ENCODE measurements at regions of chr2 and their contacts with region 1.

Region 1: DNA sequence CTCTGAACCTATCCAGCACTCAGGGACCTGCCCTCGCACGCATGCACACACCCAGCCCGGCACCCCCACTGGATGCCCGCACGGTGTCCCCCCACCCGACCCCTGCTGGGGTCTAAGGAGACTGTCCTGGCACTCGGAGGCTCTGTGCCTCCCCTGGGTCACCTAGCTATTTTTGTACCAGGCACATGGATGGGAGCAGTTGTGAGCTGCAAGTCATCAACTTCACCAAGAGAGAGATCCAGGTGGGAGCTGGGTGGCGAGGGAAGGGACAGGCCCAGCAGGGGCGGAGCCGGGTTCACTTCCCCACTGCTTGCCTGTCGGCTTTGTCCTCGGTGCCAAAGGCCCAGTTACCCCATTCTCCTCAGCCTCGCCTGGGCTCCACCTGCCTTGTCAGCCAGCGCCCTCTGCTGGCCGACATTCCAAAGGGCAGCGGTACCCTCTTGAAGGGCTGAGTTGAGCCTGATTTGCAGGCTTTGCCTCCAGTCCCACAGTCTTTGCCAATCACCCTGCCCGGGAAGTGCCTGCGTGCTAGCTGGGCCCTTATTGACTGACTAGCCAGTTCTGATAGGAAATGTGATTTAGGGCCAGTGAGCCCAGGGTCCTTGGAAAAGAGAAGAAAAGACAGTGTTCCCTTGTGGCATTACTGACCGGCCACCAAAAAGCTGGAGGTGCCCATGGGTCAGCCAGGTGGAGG is 5.8 kb downstream of the NT5DC4 start:
- DNase-seq: peak; percentile 92
- ATAC-seq: peak; percentile 96
- H3K4me3 Mint-ChIP-seq: no peak overlapping the region
- H3K27ac Mint-ChIP-seq: no peak overlapping the region
- H3K4me1 Mint-ChIP-seq: peaks cover 3% of the 10 kb centered on the region
- H3K27me3 Mint-ChIP-seq: no peaks in the 10 kb centered on the region
- CTCF ChIP-seq: peak; percentile 97

Region 2: GRCh38 chr2:112626604-112627059 is 100.0 kb before region 1 on chr2:
- CTCF ChIA-PET with region 1: interaction called, 291 read pairs
- POLR2A ChIA-PET with region 1: interaction called, 5 read pairs
- intact Hi-C with region 1: loop called (anchors 1 kb)
- DNase-seq: peak; percentile 74
- ATAC-seq: peak; percentile 43
- H3K4me3 Mint-ChIP-seq: no peak overlapping the region
- H3K27ac Mint-ChIP-seq: no peak overlapping the region
- H3K4me1 Mint-ChIP-seq: peaks cover 56% of the 10 kb centered on the region
- H3K27me3 Mint-ChIP-seq: peaks cover 13% of the 10 kb centered on the region
- CTCF ChIP-seq: peak; percentile 92

Region 3: GRCh38 chr2:112658820-112659667 is 67.6 kb before region 1 on chr2:
- CTCF ChIA-PET with region 1: interaction called, 10 read pairs
- POLR2A ChIA-PET with region 1: no interaction called
- intact Hi-C with region 1: no loop called
- DNase-seq: no peak
- ATAC-seq: no peak
- H3K4me3 Mint-ChIP-seq: no peak overlapping the region
- H3K27ac Mint-ChIP-seq: peak overlapping the region; percentile 64
- H3K4me1 Mint-ChIP-seq: peaks cover 52% of the 10 kb centered on the region
- H3K27me3 Mint-ChIP-seq: no peaks in the 10 kb centered on the region
- CTCF ChIP-seq: no peak

Region 4: GRCh38 chr2:112692496-112692911 is 34.1 kb before region 1 on chr2:
- CTCF ChIA-PET with region 1: interaction called, 37 read pairs
- POLR2A ChIA-PET with region 1: interaction called, 4 read pairs
- intact Hi-C with region 1: no loop called
- DNase-seq: peak; percentile 83
- ATAC-seq: peak; percentile 91
- H3K4me3 Mint-ChIP-seq: no peak overlapping the region
- H3K27ac Mint-ChIP-seq: peak overlapping the region; percentile 59
- H3K4me1 Mint-ChIP-seq: peaks cover 29% of the 10 kb centered on the region
- H3K27me3 Mint-ChIP-seq: no peaks in the 10 kb centered on the region
- CTCF ChIP-seq: no peak

Region 5: GRCh38 chr2:112706170-112706664 is 20.4 kb before region 1 on chr2:
- CTCF ChIA-PET with region 1: interaction called, 35 read pairs
- POLR2A ChIA-PET with region 1: interaction called, 6 read pairs
- intact Hi-C with region 1: no loop called
- DNase-seq: peak; percentile 89
- ATAC-seq: peak; percentile 96
- H3K4me3 Mint-ChIP-seq: no peak overlapping the region
- H3K27ac Mint-ChIP-seq: no peak overlapping the region
- H3K4me1 Mint-ChIP-seq: peaks cover 28% of the 10 kb centered on the region
- H3K27me3 Mint-ChIP-seq: peaks cover 20% of the 10 kb centered on the region
- CTCF ChIP-seq: no peak

Region 6: GRCh38 chr2:112749755-112750559 is 23.3 kb after region 1 on chr2:
- CTCF ChIA-PET with region 1: interaction called, 55 read pairs
- POLR2A ChIA-PET with region 1: interaction called, 3 read pairs
- intact Hi-C with region 1: no loop called
- DNase-seq: peak; percentile 83
- ATAC-seq: peak; percentile 89
- H3K4me3 Mint-ChIP-seq: no peak overlapping the region
- H3K27ac Mint-ChIP-seq: peak overlapping the region; percentile 1
- H3K4me1 Mint-ChIP-seq: peaks cover 14% of the 10 kb centered on the region
- H3K27me3 Mint-ChIP-seq: no peaks in the 10 kb centered on the region
- CTCF ChIP-seq: peak; percentile 97

Region 7: GRCh38 chr2:112821142-112821541 is 94.5 kb after region 1 on chr2:
- CTCF ChIA-PET with region 1: no interaction called
- POLR2A ChIA-PET with region 1: no interaction called
- intact Hi-C with region 1: no loop called
- DNase-seq: peak; percentile 86
- ATAC-seq: peak; percentile 95
- H3K4me3 Mint-ChIP-seq: no peak overlapping the region
- H3K27ac Mint-ChIP-seq: no peak overlapping the region
- H3K4me1 Mint-ChIP-seq: peaks cover 23% of the 10 kb centered on the region
- H3K27me3 Mint-ChIP-seq: peaks cover 5% of the 10 kb centered on the region
- CTCF ChIP-seq: no peak

Region 8: DNA sequence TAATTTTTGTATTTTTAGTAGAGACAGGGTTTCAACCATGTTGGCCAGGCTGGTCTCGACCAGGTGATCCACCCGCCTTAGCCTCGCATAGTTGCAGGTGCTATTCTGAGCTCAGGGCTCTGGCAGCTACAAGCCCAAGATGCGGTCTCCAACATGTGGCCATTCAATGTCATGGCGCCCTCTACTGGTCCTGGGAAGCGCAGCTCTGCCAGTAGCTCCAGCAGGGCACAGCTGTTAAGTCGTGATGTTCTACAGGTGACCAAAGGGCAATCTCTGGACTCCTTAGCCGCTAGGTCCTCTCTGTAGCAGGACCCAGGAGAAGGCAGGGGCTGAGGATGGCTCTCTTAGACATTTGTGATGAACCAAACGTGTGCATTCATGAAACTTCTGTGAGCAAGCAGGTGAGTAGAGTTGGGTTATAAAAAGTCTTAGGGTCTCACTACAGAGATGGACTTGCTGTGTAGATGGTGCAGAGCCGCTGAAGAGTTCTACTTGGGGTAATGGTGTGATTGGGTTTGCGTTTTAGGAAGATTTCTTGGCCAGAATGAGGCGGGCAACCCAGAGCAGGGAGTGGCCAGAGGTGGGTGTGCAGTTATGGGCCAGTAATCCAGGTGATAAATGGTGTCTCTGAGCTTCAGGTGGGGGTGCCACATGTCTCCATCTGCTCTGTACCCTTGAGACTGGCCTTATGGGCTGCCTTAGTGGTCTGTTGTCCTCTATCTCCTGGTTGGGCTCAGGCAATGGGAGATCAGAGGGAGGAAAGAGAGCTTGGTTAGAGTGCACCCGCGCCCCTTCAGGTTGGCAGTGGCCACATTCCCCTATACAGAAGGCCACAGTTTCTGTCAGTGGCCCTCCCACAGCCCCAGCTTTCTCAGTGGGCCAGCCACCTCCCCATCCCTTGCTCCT is 215.4 kb after region 1 on chr2:
- CTCF ChIA-PET with region 1: interaction called, 20 read pairs
- POLR2A ChIA-PET with region 1: no interaction called
- intact Hi-C with region 1: no loop called
- DNase-seq: peak; percentile 88
- ATAC-seq: peak; percentile 99
- H3K4me3 Mint-ChIP-seq: no peak overlapping the region
- H3K27ac Mint-ChIP-seq: no peak overlapping the region
- H3K4me1 Mint-ChIP-seq: peaks cover 9% of the 10 kb centered on the region
- H3K27me3 Mint-ChIP-seq: no peaks in the 10 kb centered on the region
- CTCF ChIP-seq: peak; percentile 84

Region 9: DNA sequence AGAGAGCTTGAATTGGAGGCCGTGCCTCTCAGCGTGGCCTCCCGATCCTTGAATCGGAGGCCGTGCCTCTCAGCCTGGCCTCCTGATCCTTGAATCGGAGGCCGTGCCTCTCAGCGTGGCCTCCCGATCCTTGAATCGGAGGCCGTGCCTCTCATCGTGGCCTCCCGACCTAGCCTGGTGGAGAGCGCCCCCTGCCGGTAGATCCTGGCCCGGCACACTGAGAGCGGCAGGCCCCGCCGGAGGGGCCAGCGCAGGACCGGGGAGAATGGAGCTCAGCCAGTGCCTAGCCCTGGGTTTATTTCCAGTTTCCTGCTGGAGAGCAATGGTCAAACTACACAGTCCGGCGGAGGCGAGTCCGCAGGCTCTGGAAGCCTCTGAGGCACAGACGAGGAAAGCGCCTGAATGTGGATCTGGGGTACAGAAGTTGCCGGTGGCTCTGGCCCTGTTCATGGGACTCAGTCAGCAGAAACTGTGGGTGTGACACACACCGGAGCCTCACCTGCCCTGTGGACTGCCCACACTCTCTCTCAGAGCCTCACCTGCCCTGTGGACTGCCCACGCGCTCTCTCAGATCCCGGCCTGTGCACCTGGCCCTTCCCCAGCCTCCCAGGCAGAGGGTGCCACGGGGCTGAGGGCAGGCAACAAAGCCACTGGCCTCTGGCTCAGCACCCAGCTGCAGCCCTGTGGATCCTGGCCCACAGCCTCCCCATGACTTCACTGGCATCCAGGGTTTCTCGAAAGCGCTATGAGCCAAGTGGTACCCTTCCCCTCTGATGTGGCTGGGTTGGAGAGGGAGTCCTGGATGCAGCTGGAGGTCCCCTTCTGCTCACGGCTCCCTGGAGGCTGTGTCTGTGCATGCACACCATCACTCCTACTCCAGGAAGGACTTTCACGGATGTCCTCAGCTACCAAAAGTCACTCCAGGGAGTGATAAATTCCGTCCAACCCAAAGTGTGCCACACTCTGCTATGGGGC is 324.6 kb after region 1 on chr2:
- CTCF ChIA-PET with region 1: no interaction called
- POLR2A ChIA-PET with region 1: no interaction called
- intact Hi-C with region 1: no loop called
- DNase-seq: no peak
- ATAC-seq: no peak
- H3K4me3 Mint-ChIP-seq: no peak overlapping the region
- H3K27ac Mint-ChIP-seq: no peak overlapping the region
- H3K4me1 Mint-ChIP-seq: peaks cover 8% of the 10 kb centered on the region
- H3K27me3 Mint-ChIP-seq: peaks cover 2% of the 10 kb centered on the region
- CTCF ChIP-seq: peak; percentile 38

Measured in activated CD8-positive, alpha-beta T cell treated with anti-CD3 and anti-CD28 coated beads for 36 hours (primary cell).